Cardiac septum (tissue), 1 donor: ENCODE measurements at regions of chr15 and their contacts with region 1.

Region 1: DNA sequence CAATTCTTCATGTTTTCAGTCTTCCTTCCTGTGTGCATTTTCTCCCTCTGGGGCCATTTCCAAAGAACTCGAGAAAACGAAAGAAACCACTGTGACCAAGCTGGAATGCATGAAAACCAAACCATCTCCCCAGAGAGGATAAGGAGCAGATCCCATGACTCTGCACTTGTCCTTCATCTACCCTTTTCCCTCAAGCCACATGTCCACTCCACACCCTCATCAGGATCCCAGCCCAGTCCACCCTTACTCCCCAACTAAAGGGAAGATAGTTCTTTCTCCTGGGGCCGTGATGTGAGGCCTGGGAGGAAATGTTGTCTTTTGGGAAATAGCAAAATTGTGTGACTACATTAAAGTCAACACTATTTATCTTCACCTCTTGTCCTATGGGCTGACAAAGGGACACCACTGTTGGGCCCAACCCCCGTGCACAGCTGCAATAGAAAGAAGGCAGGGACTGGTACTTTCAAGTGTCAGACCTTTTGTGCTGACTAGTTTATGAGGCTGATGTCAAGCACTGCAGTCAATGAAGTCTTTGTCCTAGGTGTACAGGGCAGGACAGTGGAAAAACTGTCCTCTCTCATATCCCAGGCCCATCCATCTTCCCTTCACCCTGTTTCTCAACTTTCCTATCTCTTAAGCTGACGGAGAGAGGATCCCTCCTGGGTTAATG is 487.1 kb upstream of the NR2F2 start:
- DNase-seq: no peak

Region 2: GRCh38 chr15:95604634-95605036 is 238.7 kb before region 1 on chr15:
- intact Hi-C with region 1: loop called (anchors 10 kb)
- DNase-seq: no peak

Region 3: DNA sequence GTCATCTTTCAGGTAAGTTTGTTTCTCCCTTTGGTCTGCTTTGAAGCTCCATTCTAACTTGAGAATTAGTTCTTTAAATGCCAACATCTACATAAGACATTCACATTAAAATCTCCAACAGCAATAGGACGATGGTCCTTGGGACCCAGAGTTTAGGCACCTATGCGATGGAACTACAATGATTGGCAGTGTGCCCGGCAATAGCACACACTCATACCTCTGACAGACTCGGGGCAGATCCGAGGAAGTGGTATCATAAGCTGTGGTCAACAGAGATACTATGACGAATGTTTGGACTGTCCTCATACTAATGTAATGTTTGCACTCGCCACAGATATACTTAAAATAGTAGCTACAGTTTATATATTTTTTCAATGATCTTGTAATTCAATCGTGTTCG is 452.9 kb after region 1 on chr15:
- intact Hi-C with region 1: no loop called
- DNase-seq: no peak